Ovary (tissue), 10 donors: ENCODE measurements at regions of chr10 and their contacts with region 1.

Region 1: GRCh38 chr10:103096153-103096552 is 96.9 kb downstream of the NT5C2 start:
- DNase-seq: no peak
- H3K4me3 ChIP-seq: no peak overlapping the region
- H3K27ac ChIP-seq: no peak overlapping the region
- H3K4me1 ChIP-seq: no peaks in the 10 kb centered on the region
- H3K27me3 ChIP-seq: no peaks in the 10 kb centered on the region
- CTCF ChIP-seq: no peak
- EP300 ChIP-seq: no peak
- POLR2A ChIP-seq: no peak

Region 2: GRCh38 chr10:103019425-103019824 is 76.7 kb before region 1 on chr10:
- intact Hi-C with region 1: loop called in 1 of 4 experiments (anchors 2 kb)
- DNase-seq: no peak
- H3K4me3 ChIP-seq: no peak overlapping the region
- H3K27ac ChIP-seq: no peak overlapping the region
- H3K4me1 ChIP-seq: peaks cover 1% of the 10 kb centered on the region
- H3K27me3 ChIP-seq: no peaks in the 10 kb centered on the region
- CTCF ChIP-seq: no peak
- EP300 ChIP-seq: no peak
- POLR2A ChIP-seq: no peak

Region 3: GRCh38 chr10:103030649-103031048 is 65.5 kb before region 1 on chr10:
- intact Hi-C with region 1: no loop called
- DNase-seq: no peak
- H3K4me3 ChIP-seq: no peak overlapping the region
- H3K27ac ChIP-seq: no peak overlapping the region
- H3K4me1 ChIP-seq: no peaks in the 10 kb centered on the region
- H3K27me3 ChIP-seq: no peaks in the 10 kb centered on the region
- CTCF ChIP-seq: no peak
- EP300 ChIP-seq: no peak
- POLR2A ChIP-seq: no peak

Region 4: DNA sequence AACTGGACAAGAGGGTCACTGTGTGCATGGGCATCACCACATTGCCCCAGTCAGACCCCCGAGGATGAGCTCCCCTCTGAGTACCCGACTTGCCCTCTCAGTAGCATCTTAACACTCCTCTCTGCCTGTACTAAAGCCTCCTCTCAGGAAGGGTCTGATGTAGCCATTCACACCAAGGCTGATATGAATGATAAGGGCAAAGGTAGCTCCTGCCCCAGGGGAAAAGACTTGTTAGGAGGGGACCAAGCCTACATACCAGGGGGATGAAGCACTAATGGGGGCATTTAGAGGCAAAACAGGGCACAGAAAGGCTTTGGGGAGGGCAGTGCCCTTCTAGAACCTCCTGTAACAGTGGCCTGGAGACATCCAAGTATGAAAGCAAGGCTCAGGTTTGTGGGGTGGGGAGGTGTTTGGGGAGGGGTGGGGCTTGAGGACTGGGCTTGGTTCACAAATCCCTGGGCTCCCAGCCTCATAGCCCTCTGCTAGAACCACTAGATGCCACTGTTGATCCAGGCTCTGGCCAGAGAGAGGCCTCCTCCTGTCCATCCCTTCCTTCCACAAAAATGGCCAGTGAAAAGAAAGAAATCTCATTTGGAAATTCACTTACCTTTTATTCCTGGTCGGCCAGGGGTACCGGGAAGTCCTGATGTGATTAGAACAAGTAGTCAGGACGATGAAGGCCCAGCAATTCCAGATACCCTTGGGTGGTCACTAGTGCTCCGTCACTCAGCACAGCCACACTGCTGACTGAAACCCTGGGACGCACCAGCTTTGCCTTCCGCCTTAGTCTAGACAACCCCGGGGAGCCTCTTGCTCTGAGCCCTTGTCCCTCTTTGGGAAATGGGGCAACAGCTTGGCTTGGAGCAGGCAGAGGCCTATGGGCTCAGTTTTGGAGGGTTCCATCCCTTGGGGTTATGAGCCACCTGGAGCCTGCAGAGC is 949.3 kb after region 1 on chr10:
- intact Hi-C with region 1: loop called in 1 of 4 experiments (anchors 5 kb)
- DNase-seq: peak in 3 of 5 donors; percentile 33 to 39 (median 38)
- H3K4me3 ChIP-seq: no peak overlapping the region
- H3K27ac ChIP-seq: no peak overlapping the region
- H3K4me1 ChIP-seq: no peaks in the 10 kb centered on the region
- H3K27me3 ChIP-seq: no peaks in the 10 kb centered on the region
- CTCF ChIP-seq: peak in 1 of 3 donors; percentile 23
- EP300 ChIP-seq: no peak
- POLR2A ChIP-seq: no peak